ENCODE measurements at regions of chr5 and their contacts with region 1.

Region 1: DNA sequence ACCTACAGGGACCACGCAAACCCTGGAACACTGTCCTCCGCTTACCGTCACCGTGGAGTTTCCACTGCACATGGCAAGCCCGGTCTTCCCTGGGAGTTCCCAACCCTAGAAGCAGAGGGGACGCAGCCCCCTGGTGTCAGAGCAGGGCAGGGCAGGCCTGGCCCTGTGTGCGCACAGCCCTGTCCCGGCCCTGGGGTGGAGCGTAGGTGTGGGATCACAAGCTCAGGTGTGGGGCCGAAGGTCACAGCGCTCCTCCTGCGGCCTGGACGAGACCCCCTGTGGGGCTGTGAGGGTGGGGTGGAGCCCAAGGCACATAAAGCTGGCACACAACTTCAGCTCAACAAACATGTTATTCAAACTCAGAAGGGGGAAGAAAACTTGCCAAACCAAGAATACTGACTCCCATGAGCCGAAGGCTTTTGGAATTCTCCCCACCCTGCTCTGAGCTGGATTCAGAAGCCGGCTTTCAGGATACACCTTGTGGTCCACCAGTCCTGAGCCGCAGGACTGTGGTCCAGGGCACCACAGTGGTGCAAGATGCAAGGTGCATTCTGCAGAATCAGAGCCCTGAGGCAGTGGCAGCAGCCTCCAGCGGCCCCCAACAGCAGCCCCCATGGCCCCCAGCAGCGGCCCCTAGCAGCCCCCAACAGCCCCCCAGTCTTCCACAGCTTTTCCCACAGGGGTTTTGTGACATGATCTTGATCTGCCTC is 11.8 kb upstream of the EXOC3 start:
- DNase-seq: peak; percentile 38 to 84
- H3K4me3 ChIP-seq: no peak overlapping the region
- H3K27ac ChIP-seq: no peak overlapping the region
- H3K4me1 ChIP-seq: peaks cover 0 to 3% (median 1%) of the 10 kb centered on the region in 4 experiments; a peak in 1 of 7 replicates
- H3K27me3 ChIP-seq: no peaks in the 10 kb centered on the region
- CTCF ChIP-seq: peak in 2 of 3 experiments; percentile 87 to 96; a peak in 3 of 4 replicates
- EP300 ChIP-seq: no peak
- POLR2A ChIP-seq: no peak
- RAD21 ChIP-seq: peak; percentile 83 to 90

Region 2: DNA sequence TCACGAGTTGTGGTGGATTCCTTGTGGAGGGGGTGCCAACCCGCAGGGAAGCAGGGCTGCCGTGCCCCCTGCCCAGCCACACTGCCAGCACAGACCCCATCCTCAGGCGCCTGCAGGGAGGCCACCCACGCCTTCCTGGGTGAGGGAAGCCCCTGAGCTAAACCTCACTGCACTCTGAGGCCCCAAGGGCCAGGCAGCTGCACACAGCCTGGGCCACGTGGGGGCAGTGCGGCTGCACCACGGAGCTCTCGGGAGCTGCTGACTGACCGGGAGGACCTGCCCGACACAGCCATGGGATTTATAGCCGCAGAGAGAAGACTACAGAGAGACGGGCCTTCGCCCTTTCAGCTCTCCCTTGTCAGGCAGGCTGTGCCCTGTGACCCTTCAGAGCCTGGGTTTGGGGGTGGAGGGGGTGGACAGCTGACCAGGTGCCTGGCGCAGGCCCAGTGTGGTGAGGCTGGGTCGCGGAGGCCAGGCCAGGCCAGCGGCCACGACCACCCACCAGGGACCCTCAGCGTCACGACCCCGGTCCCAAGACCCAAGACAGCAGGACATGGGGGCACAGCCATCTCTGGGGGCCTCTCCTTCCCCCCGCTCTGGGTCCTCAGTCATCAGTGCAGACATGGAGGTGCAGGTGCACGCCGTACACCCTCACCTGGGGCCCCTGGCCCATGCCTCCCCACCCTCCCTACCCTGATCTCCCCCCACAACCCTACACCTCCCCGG is 113.9 kb before region 1 on chr5:
- CTCF ChIA-PET with region 1: interaction called, 44 read pairs
- POLR2A ChIA-PET with region 1: interaction called, 3 read pairs
- DNase-seq: peak; percentile 50 to 86
- H3K4me3 ChIP-seq: no peak overlapping the region
- H3K27ac ChIP-seq: no peak overlapping the region
- H3K4me1 ChIP-seq: peaks cover 0 to 19% (median under 1%) of the 10 kb centered on the region in 4 experiments; a peak in 5 of 7 replicates
- H3K27me3 ChIP-seq: peaks cover 28 to 38% (median 35%) of the 10 kb centered on the region in 4 experiments
- CTCF ChIP-seq: peak in 2 of 3 experiments; percentile 92; a peak in 3 of 4 replicates
- EP300 ChIP-seq: no peak; a peak in 1 of 3 replicates
- POLR2A ChIP-seq: no peak
- RAD21 ChIP-seq: peak; percentile 95 to 97

Region 3: DNA sequence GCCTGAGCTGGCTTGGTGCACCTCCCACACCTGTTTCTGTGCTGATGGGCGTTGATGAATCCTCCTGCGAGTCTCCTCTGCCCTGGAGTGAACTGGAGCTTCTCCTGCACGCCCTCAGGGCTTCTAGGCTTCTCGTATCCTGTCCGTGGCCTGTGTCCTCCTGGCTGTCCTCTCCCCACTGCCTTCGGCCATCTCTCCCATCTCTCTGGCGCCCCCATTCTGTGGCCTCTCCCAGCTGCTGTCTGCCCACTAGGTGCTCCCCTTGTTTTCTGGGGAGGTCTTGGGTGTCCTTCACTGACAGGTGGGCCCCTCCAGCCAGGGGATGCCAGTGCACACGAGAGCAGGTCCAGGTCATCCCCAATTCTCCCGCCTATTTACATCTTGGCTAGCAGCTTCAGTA is 80.8 kb before region 1 on chr5:
- CTCF ChIA-PET with region 1: interaction called, 16 read pairs
- POLR2A ChIA-PET with region 1: no interaction called
- DNase-seq: peak in 1 of 2 experiments; percentile 81
- H3K4me3 ChIP-seq: no peak overlapping the region
- H3K27ac ChIP-seq: no peak overlapping the region
- H3K4me1 ChIP-seq: peaks cover 0 to 12% (median 5%) of the 10 kb centered on the region in 4 experiments; a peak in 6 of 7 replicates
- H3K27me3 ChIP-seq: no peaks in the 10 kb centered on the region
- CTCF ChIP-seq: peak; percentile 81 to 96 (median 89)
- EP300 ChIP-seq: no peak
- POLR2A ChIP-seq: no peak
- RAD21 ChIP-seq: peak; percentile 54 to 69

Region 4: DNA sequence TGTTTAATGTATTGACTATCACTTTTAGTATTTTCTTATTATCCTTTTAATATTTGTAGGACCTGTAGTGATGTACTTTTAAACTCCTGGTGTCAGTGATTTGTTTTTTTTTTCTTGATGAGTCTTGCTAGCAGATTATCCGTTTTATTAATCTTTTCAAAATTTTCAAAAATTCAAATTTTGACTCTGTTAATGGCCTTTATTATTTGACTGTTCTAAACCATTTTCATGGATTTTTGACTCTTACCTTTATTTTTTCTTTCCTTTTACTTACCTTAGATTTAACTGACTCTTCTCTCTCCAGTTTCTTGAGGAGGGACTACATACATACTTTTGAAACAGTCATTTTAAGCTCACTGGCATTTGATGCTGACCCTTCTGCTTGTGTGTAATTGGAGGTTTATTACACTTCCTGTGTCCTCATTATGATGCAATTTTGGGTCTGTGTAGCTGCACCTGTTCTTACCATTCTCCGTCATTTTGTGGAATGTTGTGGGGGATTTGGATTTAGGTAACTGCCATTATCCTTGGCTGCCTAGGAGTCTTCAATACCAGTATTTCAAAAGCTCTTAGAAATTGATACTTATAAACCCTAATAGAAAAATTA is 20.1 kb before region 1 on chr5:
- CTCF ChIA-PET with region 1: interaction called, 99 read pairs
- POLR2A ChIA-PET with region 1: no interaction called
- DNase-seq: no peak
- H3K4me3 ChIP-seq: no peak overlapping the region
- H3K27ac ChIP-seq: no peak overlapping the region
- H3K4me1 ChIP-seq: peaks cover 0 to 6% (median 5%) of the 10 kb centered on the region in 4 experiments; a peak in 3 of 7 replicates
- H3K27me3 ChIP-seq: no peaks in the 10 kb centered on the region
- CTCF ChIP-seq: no peak
- EP300 ChIP-seq: no peak
- POLR2A ChIP-seq: no peak
- RAD21 ChIP-seq: no peak

Region 5: DNA sequence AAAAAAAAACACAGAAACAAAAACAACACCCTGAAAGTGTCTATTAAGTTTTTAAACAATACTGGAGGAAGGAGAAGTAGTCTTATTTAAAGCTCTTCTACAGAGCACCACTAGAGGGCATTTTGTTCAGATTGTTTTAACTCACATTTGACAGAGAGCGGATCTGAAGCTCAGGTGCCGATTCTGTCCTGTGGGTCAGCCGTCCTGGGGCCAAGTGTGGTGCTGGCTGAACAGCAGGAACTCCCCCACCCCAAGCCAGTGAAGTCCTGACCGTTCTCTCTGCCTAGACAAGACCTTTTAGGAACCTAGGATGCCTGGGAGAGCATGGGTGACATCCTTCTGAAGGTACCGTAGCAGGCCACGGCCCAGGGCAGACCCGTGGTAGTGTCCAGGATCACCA is 15.7 kb after region 1 on chr5:
- CTCF ChIA-PET with region 1: interaction called, 12 read pairs
- POLR2A ChIA-PET with region 1: interaction called, 3 read pairs
- DNase-seq: no peak
- H3K4me3 ChIP-seq: no peak overlapping the region
- H3K27ac ChIP-seq: no peak overlapping the region
- H3K4me1 ChIP-seq: peaks cover 0 to 12% (median 8%) of the 10 kb centered on the region in 4 experiments; a peak in 5 of 7 replicates
- H3K27me3 ChIP-seq: peaks cover 0 to 4% (median 0%) of the 10 kb centered on the region in 4 experiments; a peak in 2 of 7 replicates
- CTCF ChIP-seq: peak in 2 of 3 experiments; percentile 36 to 59; a peak in 2 of 4 replicates
- EP300 ChIP-seq: no peak
- POLR2A ChIP-seq: no peak
- RAD21 ChIP-seq: peak; percentile 32 to 52; a peak in 3 of 4 replicates

Region 6: GRCh38 chr5:513216-514100 is 82.3 kb after region 1 on chr5:
- CTCF ChIA-PET with region 1: no interaction called
- POLR2A ChIA-PET with region 1: no interaction called
- DNase-seq: no peak
- H3K4me3 ChIP-seq: no peak overlapping the region
- H3K27ac ChIP-seq: no peak overlapping the region
- H3K4me1 ChIP-seq: peaks cover 0 to 4% (median 0%) of the 10 kb centered on the region in 4 experiments; a peak in 1 of 7 replicates
- H3K27me3 ChIP-seq: 0 out of 7 replicates have a peak, but pooled peaks cover 0 to 2% (median 0%) of the 10 kb centered on the region in 4 experiments
- CTCF ChIP-seq: no peak
- EP300 ChIP-seq: no peak
- POLR2A ChIP-seq: no peak
- RAD21 ChIP-seq: no peak

Measured in H1 (cell line).